ENCODE measurements at regions of chr10 and their contacts with region 1.

Region 1: GRCh38 chr10:71396084-71396720 is 518 bp upstream of the CDH23 start:
- DNase-seq: peak; percentile 76
- ATAC-seq: peak; percentile 86
- H3K4me3 Mint-ChIP-seq: peak overlapping the region; percentile 63
- H3K27ac Mint-ChIP-seq: no peak overlapping the region
- H3K4me1 Mint-ChIP-seq: peaks cover 20% of the 10 kb centered on the region
- H3K27me3 Mint-ChIP-seq: peaks cover 59% of the 10 kb centered on the region
- CTCF ChIP-seq: no peak

Region 2: GRCh38 chr10:71333129-71333887 is 62.9 kb before region 1 on chr10:
- CTCF ChIA-PET with region 1: no interaction called
- POLR2A ChIA-PET with region 1: no interaction called
- DNase-seq: no peak
- ATAC-seq: no peak
- H3K4me3 Mint-ChIP-seq: no peak overlapping the region
- H3K27ac Mint-ChIP-seq: peak overlapping the region; percentile 65; the same call in 1 of the 2 replicates
- H3K4me1 Mint-ChIP-seq: peaks cover 27% of the 10 kb centered on the region
- H3K27me3 Mint-ChIP-seq: no peaks in the 10 kb centered on the region
- CTCF ChIP-seq: no peak

Region 3: DNA sequence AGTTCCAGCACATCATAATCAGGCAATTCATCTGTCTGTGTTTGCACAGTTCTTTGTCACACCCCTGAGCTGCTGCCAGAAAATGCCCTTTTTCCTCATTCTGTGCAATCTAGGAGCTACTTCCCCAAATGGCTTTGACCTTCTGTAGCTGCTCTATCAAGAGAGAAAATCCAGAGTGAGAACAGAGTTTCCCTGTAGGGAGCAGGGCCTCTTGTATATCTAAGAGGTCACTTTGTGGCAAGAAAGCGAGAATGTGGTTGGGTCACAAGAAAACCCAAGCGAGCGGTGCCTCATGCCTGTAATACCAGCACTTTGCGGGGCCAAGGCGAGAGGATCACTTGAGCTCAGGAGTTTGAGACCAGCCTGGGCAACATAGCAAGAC is 52.8 kb before region 1 on chr10:
- CTCF ChIA-PET with region 1: interaction called, 12 read pairs
- POLR2A ChIA-PET with region 1: no interaction called
- DNase-seq: no peak
- ATAC-seq: no peak
- H3K4me3 Mint-ChIP-seq: no peak overlapping the region
- H3K27ac Mint-ChIP-seq: peak overlapping the region; percentile 89; the same call in 1 of the 2 replicates
- H3K4me1 Mint-ChIP-seq: peaks cover 68% of the 10 kb centered on the region
- H3K27me3 Mint-ChIP-seq: no peaks in the 10 kb centered on the region
- CTCF ChIP-seq: no peak

Region 4: GRCh38 chr10:71431239-71432100 is 35.3 kb after region 1 on chr10:
- CTCF ChIA-PET with region 1: interaction called, 31 read pairs
- POLR2A ChIA-PET with region 1: no interaction called
- DNase-seq: peak; percentile 43
- ATAC-seq: peak; percentile 84
- H3K4me3 Mint-ChIP-seq: no peak overlapping the region
- H3K27ac Mint-ChIP-seq: no peak overlapping the region
- H3K4me1 Mint-ChIP-seq: peaks cover 9% of the 10 kb centered on the region
- H3K27me3 Mint-ChIP-seq: no peaks in the 10 kb centered on the region; the same call in 1 of the 2 replicates
- CTCF ChIP-seq: no peak

Region 5: DNA sequence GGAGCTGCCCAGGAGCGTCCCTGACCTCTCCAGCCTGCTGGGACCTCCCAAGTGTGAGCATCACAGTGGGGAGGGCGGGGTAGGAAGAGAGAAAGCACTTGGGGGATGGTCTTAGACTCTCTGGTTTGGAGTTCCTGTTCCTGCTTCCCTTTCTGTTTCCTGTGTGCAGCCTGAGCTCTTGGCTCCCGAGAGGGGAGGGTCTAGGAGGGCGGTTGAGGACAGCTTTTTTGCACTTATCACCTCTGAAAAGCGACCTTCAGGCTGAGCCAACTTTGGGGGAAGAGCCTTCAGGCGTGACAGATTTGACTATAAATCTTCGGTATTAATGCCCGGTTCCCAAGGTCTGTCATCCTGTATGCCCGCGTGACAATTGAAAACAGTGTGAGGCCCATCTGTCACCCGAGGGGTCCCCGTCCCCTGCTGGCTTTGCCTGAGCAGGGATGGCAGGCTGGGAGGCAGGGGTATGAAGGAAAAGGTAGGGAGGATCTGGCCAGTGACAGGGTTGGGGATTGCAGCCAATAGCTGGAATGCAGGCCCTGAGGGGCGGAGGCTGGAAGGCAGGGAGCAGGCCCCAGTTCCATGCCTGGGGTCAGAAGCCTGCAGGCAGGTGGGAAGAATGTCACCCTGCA is 79.2 kb after region 1 on chr10:
- CTCF ChIA-PET with region 1: interaction called, 36 read pairs
- POLR2A ChIA-PET with region 1: no interaction called
- DNase-seq: peak; percentile 50
- ATAC-seq: peak; percentile 92
- H3K4me3 Mint-ChIP-seq: no peak overlapping the region
- H3K27ac Mint-ChIP-seq: 0 out of 2 replicates have a peak overlapping the region, but pooled peaks have one; percentile 20
- H3K4me1 Mint-ChIP-seq: peaks cover 10% of the 10 kb centered on the region
- H3K27me3 Mint-ChIP-seq: no peaks in the 10 kb centered on the region
- CTCF ChIP-seq: no peak

Region 6: GRCh38 chr10:71569775-71570588 is 173.8 kb after region 1 on chr10:
- CTCF ChIA-PET with region 1: interaction called, 35 read pairs
- POLR2A ChIA-PET with region 1: no interaction called
- DNase-seq: peak; percentile 92
- ATAC-seq: peak; percentile 62
- H3K4me3 Mint-ChIP-seq: no peak overlapping the region
- H3K27ac Mint-ChIP-seq: no peak overlapping the region
- H3K4me1 Mint-ChIP-seq: peaks cover 7% of the 10 kb centered on the region
- H3K27me3 Mint-ChIP-seq: no peaks in the 10 kb centered on the region; the same call in 1 of the 2 replicates
- CTCF ChIP-seq: peak; percentile 91

Measured in WTC11 (cell line).